Activated CD4-positive, alpha-beta T cell treated with anti-CD3 and anti-CD28 coated beads for 36 hours (primary cell): ENCODE measurements at regions of chr15 and their contacts with region 1.

Region 1: GRCh38 chr15:29018120-29018805 is 132.5 kb downstream of the APBA2 start:
- DNase-seq: no peak
- ATAC-seq: no peak
- H3K4me3 Mint-ChIP-seq: no peak overlapping the region
- H3K27ac Mint-ChIP-seq: no peak overlapping the region
- H3K4me1 Mint-ChIP-seq: peaks cover 35% of the 10 kb centered on the region
- H3K27me3 Mint-ChIP-seq: no peaks in the 10 kb centered on the region

Region 2: GRCh38 chr15:28994831-28995596 is 23.2 kb before region 1 on chr15:
- CTCF ChIA-PET with region 1: interaction called, 5 read pairs
- POLR2A ChIA-PET with region 1: no interaction called
- intact Hi-C with region 1: loop called in 1 of 2 experiments (anchors 1 kb)
- DNase-seq: no peak
- ATAC-seq: no peak
- H3K4me3 Mint-ChIP-seq: no peak overlapping the region
- H3K27ac Mint-ChIP-seq: peak overlapping the region; percentile 35
- H3K4me1 Mint-ChIP-seq: peaks cover 46% of the 10 kb centered on the region
- H3K27me3 Mint-ChIP-seq: no peaks in the 10 kb centered on the region

Region 3: GRCh38 chr15:29045717-29046116 is 27.5 kb after region 1 on chr15:
- CTCF ChIA-PET with region 1: interaction called, 4 read pairs
- POLR2A ChIA-PET with region 1: no interaction called
- intact Hi-C with region 1: loop called in 1 of 2 experiments (anchors 5 kb)
- DNase-seq: peak; percentile 54
- ATAC-seq: peak; percentile 100
- H3K4me3 Mint-ChIP-seq: no peak overlapping the region
- H3K27ac Mint-ChIP-seq: peak overlapping the region; percentile 25
- H3K4me1 Mint-ChIP-seq: peaks cover 58% of the 10 kb centered on the region
- H3K27me3 Mint-ChIP-seq: no peaks in the 10 kb centered on the region

Region 4: GRCh38 chr15:29081781-29082180 is 63.5 kb after region 1 on chr15:
- CTCF ChIA-PET with region 1: interaction called, 3 read pairs
- POLR2A ChIA-PET with region 1: no interaction called
- intact Hi-C with region 1: loop called in 1 of 2 experiments (anchors 5 kb)
- DNase-seq: no peak
- ATAC-seq: no peak
- H3K4me3 Mint-ChIP-seq: no peak overlapping the region
- H3K27ac Mint-ChIP-seq: no peak overlapping the region
- H3K4me1 Mint-ChIP-seq: peaks cover 5% of the 10 kb centered on the region
- H3K27me3 Mint-ChIP-seq: no peaks in the 10 kb centered on the region

Region 5: DNA sequence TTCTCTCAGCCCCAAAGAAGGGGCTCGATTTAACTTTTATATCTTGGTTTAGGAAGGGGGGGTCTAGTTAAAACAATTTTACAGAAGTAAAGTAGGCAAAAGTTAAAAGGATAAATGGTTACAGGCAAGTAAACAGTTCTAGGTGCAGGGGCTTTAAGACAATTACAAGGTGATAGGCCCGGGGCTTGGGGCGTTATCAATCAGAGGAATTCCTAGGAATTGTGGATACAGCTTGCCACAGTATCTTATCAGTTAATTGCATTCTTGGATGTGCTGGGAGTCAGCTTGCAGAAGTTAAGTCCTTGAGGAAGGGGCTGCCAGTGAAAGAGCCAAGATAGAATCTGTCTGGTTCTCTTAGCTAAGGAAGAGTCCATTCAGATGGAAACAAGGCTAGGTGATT is 198.7 kb after region 1 on chr15:
- CTCF ChIA-PET with region 1: no interaction called
- POLR2A ChIA-PET with region 1: no interaction called
- intact Hi-C with region 1: no loop called
- DNase-seq: no peak
- ATAC-seq: no peak
- H3K4me3 Mint-ChIP-seq: no peak overlapping the region
- H3K27ac Mint-ChIP-seq: no peak overlapping the region
- H3K4me1 Mint-ChIP-seq: no peaks in the 10 kb centered on the region
- H3K27me3 Mint-ChIP-seq: peaks cover 11% of the 10 kb centered on the region